Naive thymus-derived CD4-positive, alpha-beta T cell (primary cell): ENCODE measurements at regions of chr22 and their contacts with region 1.

Region 1: GRCh38 chr22:39532215-39533071 is at the start of gene RPS19BP1:
- DNase-seq: peak; percentile 92 to 100 (median 99)
- ATAC-seq: peak; percentile 89
- H3K4me3 ChIP-seq: peak within 1 kb of the TSS; percentile 92
- H3K4me3 Mint-ChIP-seq: peak within 1 kb of the TSS; percentile 92 to 98 (median 95)
- H3K27ac ChIP-seq: peak within 1 kb of the TSS; percentile 95
- H3K27ac Mint-ChIP-seq: peak within 1 kb of the TSS; percentile 85 to 98 (median 95)
- H3K4me1 ChIP-seq: peaks cover 39 to 53% of the 10 kb centered on the region in 2 donors
- H3K4me1 Mint-ChIP-seq: peaks cover 41 to 60% (median 52%) of the 10 kb centered on the region in 7 donors
- H3K27me3 ChIP-seq: no peaks in the 10 kb centered on the region
- H3K27me3 Mint-ChIP-seq: peaks cover 0 to 4% (median 0%) of the 10 kb centered on the region in 5 donors
- total RNA-seq, gene RPS19BP1: 35.2 to 67.4 (median 61.5) TPM

Region 2: DNA sequence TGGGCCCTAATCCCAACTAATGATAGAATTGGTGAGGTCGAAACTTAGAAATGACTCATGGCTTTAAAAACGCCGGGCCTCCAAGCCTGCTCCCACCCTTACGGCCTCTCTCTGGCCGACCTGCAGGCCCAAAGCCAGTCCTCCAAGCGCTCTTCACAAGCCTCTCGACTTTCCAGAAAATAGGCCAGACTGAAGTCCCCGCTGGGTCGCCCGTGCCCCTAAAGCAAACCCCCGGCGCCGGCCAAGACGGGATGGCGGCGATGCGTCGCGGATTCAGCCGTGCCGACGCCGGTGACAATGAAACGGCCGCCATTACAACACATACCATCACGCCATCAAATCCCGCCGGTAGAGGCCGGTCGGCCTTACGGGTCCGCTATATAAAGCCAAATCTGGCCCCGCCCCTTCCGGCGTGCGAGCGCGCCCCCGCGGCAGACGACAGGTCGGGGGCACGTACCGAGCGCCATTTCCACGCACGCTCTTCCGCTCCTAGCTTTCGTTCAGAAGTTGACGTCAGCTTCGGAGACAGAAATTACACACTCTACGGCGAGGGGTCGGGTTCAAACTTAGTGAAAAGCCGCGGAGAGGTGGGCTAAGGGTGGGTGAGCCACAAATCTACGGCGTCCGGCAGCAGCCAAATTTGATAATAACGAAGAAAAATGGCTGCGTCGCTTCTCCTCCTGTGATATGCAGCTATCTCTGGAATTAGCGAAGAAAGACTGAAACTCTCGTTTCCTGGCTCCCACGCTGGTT is 213.0 kb before region 1 on chr22 and contains the start of gene RPL3:
- CTCF ChIA-PET with region 1: interaction called, 8 read pairs
- POLR2A ChIA-PET with region 1: interaction called, 68 read pairs
- intact Hi-C with region 1: loop called (anchors 1 kb)
- DNase-seq: peak; percentile 97 to 99 (median 98)
- ATAC-seq: peak; percentile 93
- H3K4me3 ChIP-seq: peak within 1 kb of the TSS; percentile 81
- H3K4me3 Mint-ChIP-seq: peak within 1 kb of the TSS; percentile 95 to 100 (median 98)
- H3K27ac ChIP-seq: peak within 1 kb of the TSS; percentile 90
- H3K27ac Mint-ChIP-seq: peak within 1 kb of the TSS; percentile 95 to 99 (median 97)
- H3K4me1 ChIP-seq: peaks cover 34 to 39% of the 10 kb centered on the region in 2 donors
- H3K4me1 Mint-ChIP-seq: peaks cover 27 to 51% (median 35%) of the 10 kb centered on the region in 7 donors
- H3K27me3 ChIP-seq: no peaks in the 10 kb centered on the region
- H3K27me3 Mint-ChIP-seq: peaks cover 0 to 3% (median 0%) of the 10 kb centered on the region in 5 donors
- total RNA-seq, gene RPL3: 1,611 to 3,932 (median 3,789) TPM

Region 3: DNA sequence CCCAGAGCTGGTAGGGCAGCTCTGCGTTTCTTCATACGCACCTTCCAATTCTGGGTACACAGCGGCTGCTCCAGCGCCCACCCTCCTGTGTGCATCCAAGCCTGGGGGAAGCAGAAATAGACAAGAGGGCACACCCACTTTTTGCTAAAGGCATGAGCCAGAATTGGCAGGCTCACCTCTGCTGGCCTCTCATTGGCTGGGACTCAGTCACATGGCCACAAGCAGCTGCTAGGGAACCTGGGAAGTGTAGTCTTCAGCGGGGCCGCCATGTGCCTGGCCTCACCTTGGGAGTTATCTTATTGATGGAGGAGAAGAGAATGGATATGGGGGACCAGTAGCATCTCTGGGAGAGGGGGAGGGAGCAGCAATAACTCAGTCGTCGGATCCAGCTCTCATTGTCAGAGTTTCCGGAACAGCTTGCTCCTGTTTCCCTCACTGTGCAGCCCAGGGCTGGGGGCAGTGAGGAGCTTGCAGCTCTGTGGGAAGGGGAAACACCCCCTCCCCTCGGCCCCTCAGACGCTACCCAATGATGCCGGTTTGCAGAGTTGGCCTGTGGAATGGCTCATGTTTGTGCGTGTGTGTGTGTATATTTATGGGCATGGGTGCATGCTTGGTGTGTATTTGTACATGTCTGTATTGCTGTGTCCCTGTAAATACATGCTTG is 42.2 kb before region 1 on chr22:
- CTCF ChIA-PET with region 1: interaction called, 120 read pairs
- POLR2A ChIA-PET with region 1: interaction called, 31 read pairs
- intact Hi-C with region 1: no loop called
- DNase-seq: peak; percentile 43 to 83 (median 69)
- ATAC-seq: peak; percentile 97
- H3K4me3 ChIP-seq: no peak overlapping the region
- H3K4me3 Mint-ChIP-seq: peak overlapping the region in 1 of 10 donors; percentile 59
- H3K27ac ChIP-seq: no peak overlapping the region
- H3K27ac Mint-ChIP-seq: peak overlapping the region in 2 of 9 donors; percentile 82 to 88
- H3K4me1 ChIP-seq: no peaks in the 10 kb centered on the region
- H3K4me1 Mint-ChIP-seq: peaks cover 6 to 17% (median 14%) of the 10 kb centered on the region in 7 donors
- H3K27me3 ChIP-seq: no peaks in the 10 kb centered on the region
- H3K27me3 Mint-ChIP-seq: no peaks in the 10 kb centered on the region

Region 4: DNA sequence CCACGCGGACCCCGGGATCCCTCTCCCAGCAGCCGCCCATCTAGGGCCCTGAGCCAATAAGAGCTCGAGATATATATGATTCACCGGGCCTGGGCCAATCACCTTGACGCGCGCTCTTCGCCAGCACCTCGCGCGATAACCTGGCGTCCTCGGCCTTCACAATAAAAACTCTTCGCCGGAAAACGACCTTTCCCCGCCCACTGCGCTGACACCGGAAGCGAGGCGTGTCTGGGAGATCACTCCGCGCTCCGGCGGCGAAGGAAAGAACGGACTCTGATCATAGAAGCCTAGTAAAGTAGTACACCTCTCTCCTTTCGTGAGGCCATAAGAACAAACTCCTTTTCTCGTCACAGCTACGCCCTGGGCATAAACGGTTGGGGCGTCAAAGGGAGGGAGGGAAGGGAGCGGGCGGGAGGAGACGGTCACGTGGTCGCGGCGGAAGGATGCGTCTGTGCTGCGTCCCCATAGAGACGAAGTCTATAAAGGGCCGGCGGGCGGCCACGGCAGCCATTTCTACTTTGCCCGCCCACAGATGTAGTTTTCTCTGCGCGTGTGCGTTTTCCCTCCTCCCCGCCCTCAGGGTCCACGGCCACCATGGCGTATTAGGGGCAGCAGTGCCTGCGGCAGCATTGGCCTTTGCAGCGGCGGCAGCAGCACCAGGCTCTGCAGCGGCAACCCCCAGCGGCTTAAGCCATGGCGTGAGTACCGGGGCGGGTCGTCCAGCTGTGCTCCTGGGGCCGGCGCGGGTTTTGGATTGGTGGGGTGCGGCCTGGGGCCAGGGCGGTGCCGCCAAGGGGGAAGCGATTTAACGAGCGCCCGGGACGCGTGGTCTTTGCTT is 12.2 kb before region 1 on chr22 and contains the start of gene ATF4:
- CTCF ChIA-PET with region 1: interaction called, 50 read pairs
- POLR2A ChIA-PET with region 1: interaction called, 105 read pairs
- intact Hi-C with region 1: loop called (anchors 1 kb)
- DNase-seq: peak; percentile 88 to 98 (median 96)
- ATAC-seq: peak; percentile 92
- H3K4me3 ChIP-seq: peak within 1 kb of the TSS; percentile 96
- H3K4me3 Mint-ChIP-seq: peak within 1 kb of the TSS; percentile 83 to 99 (median 96)
- H3K27ac ChIP-seq: peak within 1 kb of the TSS; percentile 84
- H3K27ac Mint-ChIP-seq: peak within 1 kb of the TSS; percentile 94 to 100 (median 97)
- H3K4me1 ChIP-seq: peaks cover 27 to 39% of the 10 kb centered on the region in 2 donors
- H3K4me1 Mint-ChIP-seq: peaks cover 29 to 61% (median 48%) of the 10 kb centered on the region in 7 donors
- H3K27me3 ChIP-seq: no peaks in the 10 kb centered on the region
- H3K27me3 Mint-ChIP-seq: peaks cover 0 to 4% (median 0%) of the 10 kb centered on the region in 5 donors
- total RNA-seq, gene ATF4: 235 to 293 (median 244) TPM

Region 5: DNA sequence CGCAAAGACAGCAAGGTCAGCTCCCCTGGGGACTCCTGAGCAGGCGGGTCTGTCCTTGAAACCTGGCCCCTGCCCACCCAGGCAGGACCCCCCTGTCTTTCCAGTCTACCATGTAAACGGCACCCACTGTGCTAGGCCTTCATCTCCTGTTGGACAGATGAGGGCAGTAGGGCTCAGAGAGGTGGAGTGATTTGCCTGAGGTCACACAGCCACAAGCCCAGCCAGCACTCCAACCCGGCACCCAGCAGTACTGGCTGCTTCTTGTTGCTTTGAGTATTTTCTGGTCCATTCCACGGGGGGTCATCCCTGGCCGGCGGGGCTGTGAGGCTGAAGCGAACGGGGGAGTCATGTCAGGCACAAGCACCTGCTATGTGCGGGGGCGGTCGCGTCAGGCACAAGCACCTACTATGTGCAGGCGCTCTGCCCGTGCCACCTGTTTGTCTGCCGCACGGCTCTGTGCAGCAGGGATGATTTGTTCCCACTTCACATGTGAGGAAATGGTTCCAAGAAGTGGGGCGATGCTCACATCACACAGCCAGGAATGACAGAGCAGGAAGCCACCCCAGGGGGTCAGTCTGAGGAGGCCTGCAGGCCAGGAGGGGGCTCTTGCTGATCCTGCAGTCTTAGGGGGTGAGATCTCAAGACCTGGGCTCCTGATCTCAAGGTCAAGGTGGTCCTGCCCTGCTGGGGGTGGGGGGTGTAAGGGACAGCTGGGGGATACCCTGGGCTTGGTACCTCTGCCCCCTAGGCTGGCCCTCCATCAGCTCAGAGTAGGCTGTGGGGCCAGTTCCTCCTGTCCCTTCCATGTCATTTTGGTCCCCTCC is 148.8 kb after region 1 on chr22:
- CTCF ChIA-PET with region 1: no interaction called
- POLR2A ChIA-PET with region 1: no interaction called
- intact Hi-C with region 1: no loop called
- DNase-seq: no peak
- ATAC-seq: no peak
- H3K4me3 ChIP-seq: no peak overlapping the region
- H3K4me3 Mint-ChIP-seq: no peak overlapping the region
- H3K27ac ChIP-seq: no peak overlapping the region
- H3K27ac Mint-ChIP-seq: peak overlapping the region in 1 of 9 donors; percentile 62
- H3K4me1 ChIP-seq: no peaks in the 10 kb centered on the region
- H3K4me1 Mint-ChIP-seq: peaks cover 0 to 4% (median 0%) of the 10 kb centered on the region in 7 donors
- H3K27me3 ChIP-seq: no peaks in the 10 kb centered on the region
- H3K27me3 Mint-ChIP-seq: peaks cover 0 to 13% (median 5%) of the 10 kb centered on the region in 5 donors

Region 6: GRCh38 chr22:39727541-39727940 is 195.1 kb after region 1 on chr22:
- CTCF ChIA-PET with region 1: no interaction called
- POLR2A ChIA-PET with region 1: no interaction called
- intact Hi-C with region 1: no loop called
- DNase-seq: peak in 1 of 9 donors; percentile 8
- ATAC-seq: no peak
- H3K4me3 ChIP-seq: no peak overlapping the region
- H3K4me3 Mint-ChIP-seq: no peak overlapping the region
- H3K27ac ChIP-seq: no peak overlapping the region
- H3K27ac Mint-ChIP-seq: no peak overlapping the region
- H3K4me1 ChIP-seq: no peaks in the 10 kb centered on the region
- H3K4me1 Mint-ChIP-seq: peaks cover 0 to 5% (median 0%) of the 10 kb centered on the region in 7 donors
- H3K27me3 ChIP-seq: no peaks in the 10 kb centered on the region
- H3K27me3 Mint-ChIP-seq: peaks cover 0 to 17% (median 0%) of the 10 kb centered on the region in 5 donors

Region 7: DNA sequence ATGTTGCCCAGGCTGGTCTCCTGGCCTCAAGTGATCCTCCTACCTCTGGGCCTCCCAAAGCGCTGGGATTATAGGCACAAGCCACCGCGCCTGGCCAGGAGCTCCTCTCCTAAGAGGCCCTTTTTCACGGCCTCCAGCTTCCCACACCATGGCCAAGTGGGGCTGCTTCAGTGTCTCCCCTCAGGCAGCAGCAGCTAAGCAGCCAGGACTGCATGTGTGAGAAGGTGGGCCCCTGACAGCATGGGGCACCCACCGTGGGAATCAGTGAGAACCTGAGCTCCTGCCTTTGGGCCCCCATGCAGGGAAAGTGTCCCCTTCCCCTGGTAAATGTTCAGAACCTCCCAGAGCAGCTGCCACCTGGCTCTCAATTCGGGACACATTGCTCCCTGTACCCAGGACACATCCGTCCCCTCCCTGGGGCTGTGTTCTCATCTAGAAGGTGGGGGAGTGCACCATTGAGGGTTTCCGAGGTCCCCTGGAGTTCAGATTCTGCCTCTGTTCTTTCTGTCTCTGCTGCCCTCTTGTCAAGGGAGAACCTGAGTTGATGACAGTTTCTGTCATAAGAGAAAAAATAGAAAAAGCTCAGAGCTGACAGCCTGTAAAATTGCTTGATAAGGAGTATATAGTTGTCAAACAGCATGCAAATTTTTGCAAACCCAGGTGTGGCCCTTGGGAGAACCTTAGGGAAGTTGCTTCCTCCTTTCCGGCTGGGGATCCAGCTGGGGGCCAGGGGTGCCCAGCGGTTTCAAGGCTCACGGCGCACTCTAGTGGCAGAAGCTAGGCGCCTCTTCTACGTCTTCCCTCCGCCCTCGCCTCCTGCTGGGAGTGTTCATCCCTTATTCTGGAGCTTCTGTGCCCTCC is 492.0 kb after region 1 on chr22:
- CTCF ChIA-PET with region 1: interaction called, 73 read pairs
- POLR2A ChIA-PET with region 1: interaction called, 4 read pairs
- intact Hi-C with region 1: loop called (anchors 1 kb)
- DNase-seq: peak; percentile 26 to 59 (median 44)
- ATAC-seq: peak; percentile 79
- H3K4me3 ChIP-seq: no peak overlapping the region
- H3K4me3 Mint-ChIP-seq: no peak overlapping the region
- H3K27ac ChIP-seq: no peak overlapping the region
- H3K27ac Mint-ChIP-seq: no peak overlapping the region
- H3K4me1 ChIP-seq: peaks cover 0 to 4% of the 10 kb centered on the region in 2 donors
- H3K4me1 Mint-ChIP-seq: peaks cover 0 to 6% (median 4%) of the 10 kb centered on the region in 7 donors
- H3K27me3 ChIP-seq: no peaks in the 10 kb centered on the region
- H3K27me3 Mint-ChIP-seq: no peaks in the 10 kb centered on the region

Region 8: GRCh38 chr22:40346178-40347118 is 814.0 kb after region 1 on chr22 and contains the start of gene ADSL:
- CTCF ChIA-PET with region 1: interaction called, 12 read pairs
- POLR2A ChIA-PET with region 1: interaction called, 4 read pairs
- intact Hi-C with region 1: loop called (anchors 1 kb)
- DNase-seq: peak; percentile 70 to 88 (median 81)
- ATAC-seq: peak; percentile 92
- H3K4me3 ChIP-seq: peak within 1 kb of the TSS; percentile 98
- H3K4me3 Mint-ChIP-seq: peak within 1 kb of the TSS; percentile 93 to 99 (median 98)
- H3K27ac ChIP-seq: peak within 1 kb of the TSS; percentile 83
- H3K27ac Mint-ChIP-seq: peak within 1 kb of the TSS; percentile 92 to 99 (median 98)
- H3K4me1 ChIP-seq: peaks cover 37 to 53% of the 10 kb centered on the region in 2 donors
- H3K4me1 Mint-ChIP-seq: peaks cover 36 to 69% (median 49%) of the 10 kb centered on the region in 7 donors
- H3K27me3 ChIP-seq: no peaks in the 10 kb centered on the region
- H3K27me3 Mint-ChIP-seq: no peaks in the 10 kb centered on the region
- total RNA-seq, gene ADSL: 54.4 to 127 (median 61.9) TPM